AG04449 (cell line): ENCODE measurements at regions of chr14 and their contacts with region 1.

Region 1: DNA sequence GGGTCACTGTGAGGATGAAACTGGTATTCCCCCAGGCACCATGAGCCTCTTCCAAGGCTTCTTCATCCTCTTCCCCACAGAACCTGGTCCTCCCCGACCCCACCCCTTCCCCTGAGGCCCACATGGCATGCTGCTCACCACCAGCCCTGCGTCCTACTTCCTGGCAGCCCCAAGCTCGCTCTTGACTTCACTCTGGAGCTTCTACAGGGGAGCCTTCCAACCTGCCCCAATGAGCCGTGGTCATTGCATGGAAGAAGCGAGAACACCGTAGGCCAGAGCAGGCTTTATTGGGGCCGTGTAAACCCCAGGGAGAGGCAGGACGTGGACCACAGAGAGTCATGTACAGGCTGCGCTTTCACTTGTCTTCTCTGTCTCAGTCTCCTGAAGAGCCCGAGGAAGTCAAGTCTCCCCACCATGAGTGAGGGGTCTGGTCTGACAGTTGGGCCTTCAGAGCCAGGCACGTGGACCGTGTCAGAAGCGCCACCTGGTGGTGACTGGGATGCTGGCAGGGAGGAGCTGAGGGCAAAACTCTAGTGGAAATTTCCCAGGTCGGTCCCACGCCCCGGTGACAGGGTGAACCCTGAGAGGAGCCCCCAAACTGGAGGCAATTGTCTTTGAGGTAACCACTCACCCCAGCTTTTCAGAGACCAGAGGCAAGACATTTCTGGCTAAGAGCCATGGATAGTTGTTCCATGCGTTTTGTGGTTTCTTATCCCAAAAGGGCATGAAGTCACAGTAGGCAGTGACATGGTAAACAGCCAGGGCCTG is 17.5 kb downstream of the RPS6KL1 start:
- DNase-seq: no peak
- H3K4me3 ChIP-seq: no peak overlapping the region
- CTCF ChIP-seq: peak; percentile 94

Region 2: GRCh38 chr14:74784634-74785033 is 120.9 kb before region 1 on chr14:
- CTCF ChIA-PET with region 1: no interaction called
- POLR2A ChIA-PET with region 1: no interaction called
- DNase-seq: no peak
- H3K4me3 ChIP-seq: no peak overlapping the region
- CTCF ChIP-seq: no peak

Region 3: GRCh38 chr14:74860906-74861733 is 44.4 kb before region 1 on chr14:
- CTCF ChIA-PET with region 1: interaction called, 689 read pairs
- POLR2A ChIA-PET with region 1: interaction called, 8 read pairs
- DNase-seq: no peak
- H3K4me3 ChIP-seq: no peak overlapping the region
- CTCF ChIP-seq: peak; percentile 84

Region 4: GRCh38 chr14:74881431-74882361 is 23.9 kb before region 1 on chr14 and contains the start of gene DLST:
- CTCF ChIA-PET with region 1: interaction called, 163 read pairs
- POLR2A ChIA-PET with region 1: interaction called, 3 read pairs
- DNase-seq: no peak
- H3K4me3 ChIP-seq: peak within 1 kb of the TSS; percentile 91
- CTCF ChIP-seq: no peak

Region 5: DNA sequence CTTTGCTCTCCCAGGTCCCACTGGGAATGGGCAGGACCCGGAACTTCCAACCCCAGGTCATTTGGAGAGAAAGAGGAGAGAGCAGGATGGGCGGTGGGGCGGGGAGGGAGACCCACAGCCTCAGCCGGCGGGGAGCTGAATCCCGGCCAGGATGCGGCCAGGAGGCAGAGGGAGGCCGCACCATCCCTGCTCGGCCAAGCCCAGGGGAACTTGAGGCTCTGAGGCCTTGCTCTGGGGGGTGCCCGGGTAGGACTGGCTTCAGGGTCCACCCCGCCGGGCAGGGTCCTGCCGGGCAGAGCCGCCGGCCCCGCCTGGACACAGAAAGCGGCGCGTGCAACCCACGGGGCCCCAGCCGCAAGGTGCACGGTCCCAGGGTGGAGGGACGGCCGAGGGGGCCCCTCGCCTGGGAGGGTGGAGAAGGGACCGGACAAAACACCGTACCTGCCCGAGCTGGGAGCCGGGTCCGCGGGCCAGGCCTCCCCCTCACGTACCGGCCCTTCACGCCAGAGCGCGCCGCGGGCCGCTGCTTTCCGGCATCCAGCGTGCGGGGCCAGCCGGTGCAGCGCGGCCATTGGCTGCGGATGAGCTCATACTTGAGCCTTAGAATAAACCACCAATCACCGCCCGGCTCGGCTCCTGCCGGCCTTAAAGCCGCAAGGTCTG is 17.3 kb after region 1 on chr14 and contains the start of gene RPS6KL1:
- CTCF ChIA-PET with region 1: interaction called, 61 read pairs
- POLR2A ChIA-PET with region 1: no interaction called
- DNase-seq: no peak
- H3K4me3 ChIP-seq: peak within 1 kb of the TSS; percentile 49
- CTCF ChIP-seq: no peak

Region 6: DNA sequence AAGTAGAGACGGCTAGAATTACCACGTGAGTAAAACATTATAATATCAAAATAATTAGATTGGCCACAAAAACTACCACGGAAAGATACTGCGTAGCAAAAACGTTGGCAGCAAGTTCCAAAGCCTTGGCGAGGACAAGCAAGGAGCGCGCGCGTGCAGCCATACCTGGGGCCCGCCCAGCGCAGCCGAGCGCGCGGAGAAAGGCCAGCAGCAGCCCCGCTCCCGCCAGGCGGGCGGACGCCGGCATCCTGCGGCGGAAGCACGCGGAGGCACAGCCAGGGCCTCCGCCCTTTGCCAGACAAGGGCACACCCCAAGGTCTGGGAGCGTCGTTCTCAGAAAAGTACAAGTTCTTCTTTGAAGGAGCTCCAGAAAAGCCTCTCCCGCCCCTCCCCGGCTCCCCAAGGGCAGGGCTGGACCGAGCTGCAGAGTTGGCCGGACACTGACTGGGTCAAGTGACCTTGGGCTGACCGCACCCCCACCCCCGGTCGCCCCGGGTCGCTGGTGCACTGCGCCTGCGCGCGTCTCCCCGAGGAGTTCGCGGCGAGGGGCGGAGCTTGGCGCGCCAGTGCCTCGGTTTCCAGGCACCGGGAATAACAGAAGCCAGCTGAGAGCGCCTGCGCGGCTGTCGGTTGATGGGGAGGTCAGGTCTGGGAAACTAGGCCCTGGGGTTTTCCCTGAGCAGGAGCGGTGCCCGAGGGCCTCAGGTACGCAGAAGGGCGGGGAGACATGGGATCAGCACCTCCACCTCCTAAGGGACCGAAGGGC is 163.7 kb after region 1 on chr14 and contains the start of gene ZC2HC1C:
- CTCF ChIA-PET with region 1: interaction called, 14 read pairs
- POLR2A ChIA-PET with region 1: no interaction called
- DNase-seq: no peak
- H3K4me3 ChIP-seq: peak within 1 kb of the TSS; percentile 67
- CTCF ChIP-seq: no peak

Region 7: GRCh38 chr14:76117789-76118484 is 1212.4 kb after region 1 on chr14:
- CTCF ChIA-PET with region 1: no interaction called
- POLR2A ChIA-PET with region 1: no interaction called
- DNase-seq: no peak
- H3K4me3 ChIP-seq: no peak overlapping the region
- CTCF ChIP-seq: no peak